Heart left ventricle (tissue), 16 donors: ENCODE measurements at regions of chr6 and their contacts with region 1.

Region 1: GRCh38 chr6:53794720-53795253 is at the start of gene LRRC1:
- DNase-seq: peak; percentile 92 to 96 (median 93)
- ATAC-seq: peak; percentile 79 to 95 (median 93)
- H3K4me3 ChIP-seq: peak within 1 kb of the TSS; percentile 65 to 96 (median 85)
- H3K27ac ChIP-seq: peak within 1 kb of the TSS; percentile 47 to 89 (median 78)
- H3K4me1 ChIP-seq: peaks cover 0 to 24% (median 11%) of the 10 kb centered on the region in 12 donors
- H3K27me3 ChIP-seq: peaks cover 0 to 3% (median 0%) of the 10 kb centered on the region in 9 donors
- CTCF ChIP-seq: no peak
- POLR2A ChIP-seq: peak in 1 of 2 donors; percentile 61
- total RNA-seq, gene LRRC1: 1.2 to 11.2 (median 3.6) TPM

Region 2: DNA sequence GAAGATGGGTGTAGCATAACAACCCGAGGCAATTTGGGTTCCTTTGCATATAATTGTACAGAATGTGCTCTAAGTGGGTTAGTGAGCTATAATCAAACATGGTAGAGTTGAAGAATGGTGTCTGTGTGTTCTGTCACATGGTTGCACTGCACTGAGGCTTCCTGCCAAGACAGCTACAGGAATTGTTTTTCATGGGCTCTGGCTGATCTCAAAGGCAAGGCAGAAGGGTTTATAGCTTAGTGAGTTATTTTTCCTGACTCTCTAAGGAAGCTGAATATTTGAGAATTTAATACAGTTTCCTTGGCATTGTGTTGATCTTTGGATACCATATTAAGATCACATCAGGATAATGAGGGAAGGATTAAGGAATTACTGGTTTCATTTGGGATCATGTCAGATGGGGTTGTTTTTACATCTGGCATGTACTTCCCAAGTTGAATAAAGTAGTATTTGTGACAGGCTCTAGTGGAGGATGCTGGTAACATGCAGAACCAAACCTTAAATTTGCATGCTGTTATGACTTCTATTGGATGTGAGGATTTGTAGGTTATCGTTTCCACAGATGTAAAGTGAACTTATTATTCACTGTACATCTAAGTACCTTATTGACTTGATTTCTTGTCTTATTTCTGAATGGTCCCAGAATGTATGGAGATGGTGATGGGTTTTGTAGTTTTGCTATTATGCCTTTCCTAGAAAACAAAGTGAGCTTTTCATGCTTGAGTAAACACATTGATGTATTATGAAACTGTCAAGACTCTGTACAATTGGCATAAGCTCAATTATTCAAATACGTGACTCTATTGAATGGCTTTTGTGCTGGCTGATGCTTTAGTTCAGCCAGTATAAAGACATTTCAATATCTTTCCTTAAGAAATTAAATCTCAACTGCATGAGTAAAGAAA is 43.3 kb after region 1 on chr6:
- intact Hi-C with region 1: loop called in 1 of 10 experiments (anchors 5 kb)
- DNase-seq: peak in 1 of 5 donors; percentile 24
- ATAC-seq: peak; percentile 79 to 85 (median 82)
- H3K4me3 ChIP-seq: no peak overlapping the region
- H3K27ac ChIP-seq: peak overlapping the region in 4 of 12 donors; percentile 12 to 43 (median 26)
- H3K4me1 ChIP-seq: peaks cover 0 to 18% (median 6%) of the 10 kb centered on the region in 12 donors
- H3K27me3 ChIP-seq: no peaks in the 10 kb centered on the region
- CTCF ChIP-seq: no peak
- POLR2A ChIP-seq: no peak

Region 3: DNA sequence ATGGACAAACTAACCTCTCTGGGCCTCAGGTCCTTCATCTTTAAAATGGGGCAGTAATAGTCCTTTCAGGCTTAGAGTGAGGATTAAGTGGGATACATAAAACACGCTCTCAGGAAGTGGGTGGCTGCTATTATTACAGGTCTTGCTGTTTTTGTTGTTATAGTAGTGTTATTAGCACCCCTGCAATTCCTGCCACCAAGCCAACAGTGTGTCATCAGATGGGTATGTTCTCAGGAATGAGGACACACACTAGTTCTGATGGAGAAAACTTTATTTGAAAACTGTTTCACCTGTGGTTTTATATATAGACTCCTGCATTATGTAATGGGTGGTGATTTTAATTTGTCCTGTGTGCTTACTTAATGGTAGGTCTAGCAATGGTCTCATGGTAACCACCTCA is 131.7 kb after region 1 on chr6:
- intact Hi-C with region 1: loop called in 2 of 10 experiments (anchors 10 kb)
- DNase-seq: no peak
- ATAC-seq: peak in 1 of 4 donors; percentile 5
- H3K4me3 ChIP-seq: no peak overlapping the region
- H3K27ac ChIP-seq: peak overlapping the region in 8 of 12 donors; percentile 8 to 84 (median 51)
- H3K4me1 ChIP-seq: peaks cover 0 to 35% (median 16%) of the 10 kb centered on the region in 12 donors
- H3K27me3 ChIP-seq: no peaks in the 10 kb centered on the region
- CTCF ChIP-seq: no peak
- POLR2A ChIP-seq: no peak

Region 4: GRCh38 chr6:53956068-53956711 is 161.4 kb after region 1 on chr6:
- intact Hi-C with region 1: loop called (anchors 1 to 5 kb)
- DNase-seq: peak; percentile 59 to 75 (median 70)
- ATAC-seq: peak; percentile 93 to 97 (median 96)
- H3K4me3 ChIP-seq: no peak overlapping the region
- H3K27ac ChIP-seq: no peak overlapping the region
- H3K4me1 ChIP-seq: no peaks in the 10 kb centered on the region
- H3K27me3 ChIP-seq: no peaks in the 10 kb centered on the region
- CTCF ChIP-seq: peak; percentile 38 to 81 (median 66)
- POLR2A ChIP-seq: no peak